ENCODE measurements at regions of chr18 and their contacts with region 1.

Region 1: DNA sequence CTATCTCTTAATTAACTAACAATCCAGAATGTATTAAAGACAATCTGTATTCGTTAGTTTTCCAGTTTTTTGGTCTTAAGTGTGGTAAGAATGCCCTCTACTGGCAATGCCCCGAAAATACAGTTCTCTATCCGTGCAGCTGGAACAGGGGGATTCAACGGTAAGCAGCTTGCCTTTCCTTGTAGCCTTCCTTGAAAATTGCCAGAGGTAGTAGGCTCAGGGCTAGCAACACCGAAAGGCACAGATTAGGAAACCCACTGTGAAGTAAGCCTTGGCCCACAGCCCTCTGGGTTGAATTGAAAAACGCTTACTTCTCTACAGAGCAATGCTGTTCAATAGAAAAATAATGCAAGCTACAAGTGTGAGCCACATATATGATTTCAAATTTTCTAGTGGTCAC is 17.1 kb upstream of the VPS4B start:
- DNase-seq: no peak

Region 2: GRCh38 chr18:63016270-63016669 is 423.1 kb before region 1 on chr18:
- intact Hi-C with region 1: loop called (anchors 2 kb)
- DNase-seq: no peak

Region 3: DNA sequence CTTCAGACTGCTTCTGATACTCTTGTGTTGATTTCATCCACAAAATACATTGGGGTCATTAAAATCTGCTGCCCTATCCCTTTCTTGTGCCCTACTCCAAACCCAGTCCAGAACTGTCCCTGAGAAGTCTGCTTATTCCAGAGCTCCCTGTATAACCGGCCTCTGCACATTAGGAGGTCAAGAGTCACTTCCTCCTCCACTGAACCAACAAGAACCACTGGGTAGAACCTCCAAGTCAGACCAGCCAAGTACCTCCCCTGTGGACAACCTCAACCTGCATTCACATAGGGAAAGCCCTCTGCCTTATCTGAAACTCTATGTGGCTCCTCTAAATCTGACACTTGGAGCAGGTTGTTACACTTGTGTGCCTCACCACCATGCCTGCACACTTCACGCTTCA is 94.4 kb before region 1 on chr18:
- intact Hi-C with region 1: loop called (anchors 1 kb)
- DNase-seq: no peak

Measured in cardiac septum (tissue), 1 donor.